ENCODE measurements at regions of chr13 and their contacts with region 1.

Region 1: DNA sequence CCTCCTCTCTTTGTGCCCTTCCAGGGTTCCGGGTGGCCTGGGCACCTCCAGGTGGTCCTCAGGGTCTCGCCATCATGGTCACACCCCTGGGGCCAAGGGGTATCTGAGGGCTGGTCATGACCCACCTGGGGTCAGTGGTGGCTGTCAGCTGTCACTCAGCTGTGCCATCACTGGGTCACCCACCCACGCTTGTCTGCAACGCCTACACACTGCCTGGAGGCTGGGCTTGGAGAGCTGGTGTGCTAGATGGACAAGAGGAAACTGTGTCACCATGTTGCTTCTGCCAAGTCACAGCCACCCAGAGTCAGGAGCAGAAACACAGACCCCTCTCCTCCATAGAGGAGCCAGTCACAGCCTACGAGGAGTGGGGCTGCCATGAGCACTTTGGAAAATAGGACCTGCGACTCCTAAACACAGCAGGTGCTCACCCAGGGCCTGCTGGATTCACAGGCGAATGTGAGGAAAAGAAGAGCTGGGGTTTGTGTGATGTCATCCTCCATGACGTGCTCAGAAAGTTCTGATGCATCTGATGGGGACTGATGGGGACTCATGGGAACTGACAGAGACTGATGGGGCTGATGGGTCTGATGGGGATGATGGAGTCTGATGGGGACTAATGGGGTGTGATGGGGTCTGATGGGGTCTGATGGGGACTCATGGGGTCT is 10.7 kb upstream of the GRTP1 start:
- DNase-seq: no peak
- ATAC-seq: no peak
- H3K4me3 ChIP-seq: no peak overlapping the region
- H3K27ac ChIP-seq: no peak overlapping the region
- H3K4me1 ChIP-seq: no peaks in the 10 kb centered on the region
- H3K27me3 ChIP-seq: no peaks in the 10 kb centered on the region
- CTCF ChIP-seq: no peak

Region 2: GRCh38 chr13:113275387-113275786 is 99.3 kb before region 1 on chr13:
- CTCF ChIA-PET with region 1: no interaction called
- POLR2A ChIA-PET with region 1: no interaction called
- in situ Hi-C with region 1: no loop called
- intact Hi-C with region 1: loop called (anchors 10 kb)
- DNase-seq: peak; percentile 28
- ATAC-seq: peak; percentile 73
- H3K4me3 ChIP-seq: no peak overlapping the region
- H3K27ac ChIP-seq: no peak overlapping the region
- H3K4me1 ChIP-seq: no peaks in the 10 kb centered on the region
- H3K27me3 ChIP-seq: no peaks in the 10 kb centered on the region
- CTCF ChIP-seq: no peak; the same call in 1 of the 2 replicates

Region 3: DNA sequence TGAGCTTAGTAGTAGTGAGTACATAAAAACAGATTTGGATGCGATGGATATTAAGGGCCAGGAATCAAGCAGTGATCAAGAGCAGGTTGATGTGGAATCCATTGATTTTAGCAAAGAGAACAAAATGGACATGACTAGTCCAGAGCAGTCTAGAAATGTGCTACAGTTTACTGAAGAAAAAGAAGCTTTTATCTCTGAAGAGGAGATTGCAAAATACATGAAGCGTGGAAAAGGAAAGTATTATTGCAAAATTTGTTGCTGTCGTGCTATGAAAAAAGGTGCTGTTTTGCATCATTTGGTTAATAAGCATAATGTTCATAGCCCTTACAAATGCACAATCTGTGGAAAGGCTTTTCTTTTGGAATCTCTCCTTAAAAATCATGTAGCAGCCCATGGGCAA is 951.1 kb after region 1 on chr13:
- CTCF ChIA-PET with region 1: no interaction called
- POLR2A ChIA-PET with region 1: no interaction called
- in situ Hi-C with region 1: no loop called
- intact Hi-C with region 1: no loop called
- DNase-seq: no peak
- ATAC-seq: no peak
- H3K4me3 ChIP-seq: no peak overlapping the region
- H3K27ac ChIP-seq: no peak overlapping the region
- H3K4me1 ChIP-seq: no peaks in the 10 kb centered on the region
- H3K27me3 ChIP-seq: no peaks in the 10 kb centered on the region
- CTCF ChIP-seq: no peak